H1 (cell line): ENCODE measurements at regions of chr12 and their contacts with region 1.

Region 1: DNA sequence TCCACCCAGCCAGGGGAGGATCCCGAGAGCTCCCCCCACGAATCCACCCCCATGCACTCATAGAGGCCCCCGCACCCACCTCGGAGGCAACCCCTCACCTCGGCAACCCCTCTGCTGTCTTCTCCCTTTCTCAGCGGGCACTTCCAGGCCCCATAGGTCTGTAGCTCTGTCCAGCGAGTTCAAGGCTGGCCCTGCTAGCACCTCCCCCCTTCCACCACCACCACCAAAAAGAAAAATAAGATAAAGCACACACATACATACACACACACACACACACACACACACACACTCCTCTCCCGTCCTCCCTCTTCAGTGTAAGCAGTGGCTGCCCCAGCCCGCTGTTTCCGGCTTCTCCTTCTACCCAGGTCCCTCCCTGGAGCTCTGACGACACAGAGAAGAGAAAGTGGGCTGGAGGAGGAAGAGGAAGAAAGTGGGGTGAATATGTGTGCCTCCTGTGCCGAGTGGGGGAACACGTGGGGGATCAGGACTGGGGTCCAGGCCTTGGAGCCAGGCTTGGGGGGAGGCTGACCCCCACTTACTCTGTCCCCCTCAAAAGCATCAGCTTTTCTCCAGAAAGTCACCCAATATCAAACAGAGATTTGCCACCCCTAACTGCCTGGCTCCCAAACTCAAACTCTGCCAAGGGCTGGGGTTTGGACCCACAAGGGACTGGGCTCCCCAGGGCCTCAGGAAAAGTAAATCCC is at the start of gene STAT6:
- DNase-seq: no peak
- H3K4me3 ChIP-seq: peak within 1 kb of the TSS; percentile 9 to 59 (median 50)
- H3K27ac ChIP-seq: peak within 1 kb of the TSS; percentile 87
- H3K4me1 ChIP-seq: peaks cover 3 to 31% (median 15%) of the 10 kb centered on the region in 4 experiments
- H3K27me3 ChIP-seq: no peaks in the 10 kb centered on the region
- CTCF ChIP-seq: no peak
- EP300 ChIP-seq: no peak
- POLR2A ChIP-seq: no peak
- RAD21 ChIP-seq: no peak
- total RNA-seq, gene STAT6: 26.8 and 32.9 TPM in 2 replicates

Region 2: DNA sequence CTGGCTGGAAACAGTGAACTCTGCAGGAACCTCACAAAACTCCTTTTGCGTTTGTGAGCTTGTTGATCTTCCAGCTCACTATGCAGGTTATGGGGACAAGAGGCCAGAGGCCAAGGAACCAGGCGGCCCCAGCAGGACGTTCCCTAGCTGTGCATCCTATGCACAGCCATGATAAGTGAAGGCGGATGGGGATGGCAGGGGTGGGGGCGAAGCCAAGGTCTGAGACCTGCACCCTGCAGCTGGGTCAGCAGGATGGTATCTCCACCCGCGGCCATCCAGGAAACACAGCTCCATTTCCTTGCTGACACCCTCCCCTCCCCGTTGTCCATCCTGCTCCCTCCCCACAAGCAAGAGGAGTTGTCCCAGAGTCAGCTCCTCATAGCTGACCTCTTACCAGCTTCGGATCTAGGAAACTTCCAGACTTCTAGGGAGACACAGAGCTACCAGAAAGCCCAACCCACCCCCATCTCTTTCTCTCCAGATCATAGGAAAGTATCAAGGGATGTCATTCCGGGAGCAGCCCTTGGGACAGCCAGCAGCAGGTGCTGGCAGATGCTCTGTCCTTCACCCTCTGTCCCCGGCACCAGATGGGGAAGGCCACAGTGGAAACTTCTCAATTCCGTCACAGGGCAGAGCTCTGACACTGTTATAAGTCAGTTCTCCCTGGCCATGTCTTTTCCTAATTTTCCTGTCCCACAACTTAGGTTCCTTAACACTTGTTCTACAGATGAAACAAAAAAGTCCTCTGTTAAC is 114.2 kb before region 1 on chr12:
- CTCF ChIA-PET with region 1: interaction called, 49 read pairs
- POLR2A ChIA-PET with region 1: no interaction called
- DNase-seq: peak in 1 of 2 experiments; percentile 37
- H3K4me3 ChIP-seq: no peak overlapping the region
- H3K27ac ChIP-seq: no peak overlapping the region
- H3K4me1 ChIP-seq: no peaks in the 10 kb centered on the region
- H3K27me3 ChIP-seq: no peaks in the 10 kb centered on the region
- CTCF ChIP-seq: no peak
- EP300 ChIP-seq: no peak
- POLR2A ChIP-seq: no peak
- RAD21 ChIP-seq: no peak

Region 3: DNA sequence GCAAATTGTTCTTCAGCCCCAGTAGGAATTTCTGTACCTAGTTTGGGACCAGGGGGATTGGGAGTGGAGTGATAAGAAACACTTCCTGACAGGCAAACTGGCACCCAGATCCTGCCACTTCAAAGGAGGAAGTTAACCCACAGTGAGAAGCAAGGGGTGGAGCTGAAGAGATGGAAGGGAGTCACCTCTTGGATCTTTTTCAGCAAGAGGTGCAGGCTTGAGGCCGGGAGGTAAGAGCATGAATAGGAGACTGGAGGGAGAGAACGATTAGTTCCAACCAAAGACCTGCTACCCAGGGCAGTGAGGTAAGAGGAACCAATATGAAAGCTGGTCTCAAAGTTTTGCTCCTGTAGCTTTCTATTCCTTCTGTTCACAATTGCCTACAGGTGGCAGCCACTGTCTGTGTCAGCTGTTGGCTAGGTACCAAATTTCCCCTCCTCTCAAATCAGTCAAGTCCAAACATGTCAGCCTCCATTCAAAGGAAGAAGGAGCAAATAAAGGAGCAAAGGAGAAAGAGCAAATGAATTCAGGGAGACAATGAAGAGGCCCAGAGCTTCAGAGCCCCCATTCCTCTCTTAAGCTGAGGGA is 80.0 kb before region 1 on chr12:
- CTCF ChIA-PET with region 1: interaction called, 17 read pairs
- POLR2A ChIA-PET with region 1: interaction called, 16 read pairs
- DNase-seq: no peak
- H3K4me3 ChIP-seq: no peak overlapping the region
- H3K27ac ChIP-seq: no peak overlapping the region
- H3K4me1 ChIP-seq: peaks cover 0 to 8% (median 3%) of the 10 kb centered on the region in 4 experiments; a peak in 5 of 7 replicates
- H3K27me3 ChIP-seq: peaks cover 0 to 3% (median 0%) of the 10 kb centered on the region in 4 experiments; a peak in 1 of 7 replicates
- CTCF ChIP-seq: peak in 2 of 3 experiments; percentile 12 to 46; a peak in 3 of 4 replicates
- EP300 ChIP-seq: no peak
- POLR2A ChIP-seq: no peak
- RAD21 ChIP-seq: peak; percentile 42 to 58

Region 4: GRCh38 chr12:57063991-57064685 is 47.0 kb before region 1 on chr12:
- CTCF ChIA-PET with region 1: interaction called, 225 read pairs
- POLR2A ChIA-PET with region 1: interaction called, 43 read pairs
- DNase-seq: no peak
- H3K4me3 ChIP-seq: no peak overlapping the region
- H3K27ac ChIP-seq: no peak overlapping the region
- H3K4me1 ChIP-seq: no peaks in the 10 kb centered on the region
- H3K27me3 ChIP-seq: no peaks in the 10 kb centered on the region
- CTCF ChIP-seq: no peak
- EP300 ChIP-seq: no peak
- POLR2A ChIP-seq: no peak
- RAD21 ChIP-seq: no peak

Region 5: DNA sequence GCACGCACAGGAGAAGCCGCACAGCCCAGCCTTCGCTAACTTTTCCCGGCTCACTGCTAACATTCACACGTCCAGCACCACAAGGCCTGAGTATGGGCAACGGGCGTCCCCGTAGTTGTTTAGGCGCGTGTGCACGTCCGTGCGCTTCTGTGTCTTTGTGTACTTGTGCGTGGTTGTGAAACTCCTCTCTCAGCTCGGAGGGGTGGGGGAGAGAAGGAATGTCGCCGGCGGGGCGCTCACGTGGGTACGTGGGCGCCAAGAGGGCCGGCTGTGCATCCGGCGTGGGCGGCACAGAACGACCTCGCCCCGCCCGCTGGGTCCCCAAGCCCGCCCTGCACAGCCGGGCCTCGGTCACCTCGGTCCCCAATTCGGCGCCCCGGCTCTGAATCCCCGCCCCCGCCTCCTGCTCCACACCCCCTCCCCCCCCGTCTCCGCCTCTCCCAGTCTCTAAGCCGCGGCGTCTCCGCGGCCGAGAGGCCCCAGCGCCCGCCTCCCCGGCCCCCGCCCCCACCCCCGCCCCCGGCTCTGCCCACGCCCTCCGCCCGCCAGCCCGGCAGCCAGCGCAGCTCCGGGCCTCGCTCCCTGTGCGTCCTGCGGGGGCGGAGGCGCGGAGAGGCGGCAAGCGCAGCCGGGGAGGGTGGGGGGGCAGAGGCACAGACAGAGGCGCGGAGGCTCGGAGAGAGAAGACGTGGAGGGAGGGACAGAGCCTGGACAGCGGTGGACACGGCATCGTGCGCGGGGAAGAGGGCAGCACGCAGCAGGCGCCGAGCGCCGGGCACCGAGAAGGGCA is 22.5 kb before region 1 on chr12 and contains the start of gene NAB2:
- CTCF ChIA-PET with region 1: interaction called, 325 read pairs
- POLR2A ChIA-PET with region 1: interaction called, 352 read pairs
- DNase-seq: peak in 1 of 2 experiments; percentile 87
- H3K4me3 ChIP-seq: peak within 1 kb of the TSS; percentile 92 to 96 (median 93)
- H3K27ac ChIP-seq: peak within 1 kb of the TSS; percentile 84
- H3K4me1 ChIP-seq: peaks cover 0 to 25% (median 15%) of the 10 kb centered on the region in 4 experiments; a peak in 6 of 7 replicates
- H3K27me3 ChIP-seq: no peaks in the 10 kb centered on the region
- CTCF ChIP-seq: no peak
- EP300 ChIP-seq: no peak
- POLR2A ChIP-seq: 0 out of 3 replicates have a peak, but pooled peaks of 1 of the 2 experiments have one; percentile 3
- RAD21 ChIP-seq: no peak
- total RNA-seq, gene NAB2: 20.6 and 20.9 TPM in 2 replicates

Region 6: GRCh38 chr12:57175428-57176138 is 64.4 kb after region 1 on chr12:
- CTCF ChIA-PET with region 1: interaction called, 305 read pairs
- POLR2A ChIA-PET with region 1: interaction called, 4 read pairs
- DNase-seq: peak; percentile 50 to 98
- H3K4me3 ChIP-seq: no peak overlapping the region
- H3K27ac ChIP-seq: no peak overlapping the region
- H3K4me1 ChIP-seq: no peaks in the 10 kb centered on the region
- H3K27me3 ChIP-seq: no peaks in the 10 kb centered on the region
- CTCF ChIP-seq: peak in 2 of 3 experiments; percentile 87 to 93; a peak in 3 of 4 replicates
- EP300 ChIP-seq: no peak
- POLR2A ChIP-seq: no peak
- RAD21 ChIP-seq: peak; percentile 45 to 61

Region 7: DNA sequence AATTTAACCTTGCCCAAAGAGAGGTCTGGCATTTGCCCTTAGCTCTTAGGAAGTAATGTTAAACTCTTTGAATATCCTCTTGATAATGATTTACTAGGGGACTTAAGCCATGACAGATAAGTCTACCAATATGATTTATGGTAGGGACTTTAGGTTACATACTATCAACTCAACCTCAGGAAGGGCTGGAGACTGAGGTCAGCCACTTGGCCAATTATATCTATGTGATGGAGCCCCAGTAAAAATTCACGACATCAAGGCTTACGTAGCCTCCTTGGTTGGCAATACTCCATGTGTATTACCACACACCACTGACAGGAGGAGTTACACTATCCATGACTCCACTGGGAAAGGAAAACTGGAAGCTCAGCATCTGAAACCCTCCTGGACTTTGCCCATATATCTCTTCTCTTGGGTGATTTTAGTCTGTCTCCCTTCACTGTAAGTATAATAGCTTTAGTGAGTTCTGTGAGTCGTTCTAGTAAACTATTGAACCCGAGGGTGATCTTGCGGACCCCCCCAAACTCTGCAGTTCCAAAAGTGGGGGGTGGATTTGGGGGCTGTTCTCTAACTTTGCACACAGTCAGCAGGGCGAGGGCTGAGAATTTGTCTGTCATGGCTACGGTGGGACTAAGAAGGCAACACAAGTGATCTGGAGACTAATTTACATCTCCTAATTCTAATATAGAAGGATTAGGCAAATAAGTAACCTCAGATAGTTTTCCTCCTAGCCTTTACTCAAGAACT is 257.3 kb after region 1 on chr12:
- CTCF ChIA-PET with region 1: no interaction called
- POLR2A ChIA-PET with region 1: no interaction called
- DNase-seq: no peak
- H3K4me3 ChIP-seq: no peak overlapping the region
- H3K27ac ChIP-seq: no peak overlapping the region
- H3K4me1 ChIP-seq: no peaks in the 10 kb centered on the region
- H3K27me3 ChIP-seq: no peaks in the 10 kb centered on the region
- CTCF ChIP-seq: peak in 1 of 3 experiments; percentile 32; a peak in 1 of 4 replicates
- EP300 ChIP-seq: no peak
- POLR2A ChIP-seq: no peak
- RAD21 ChIP-seq: peak in 1 of 2 experiments; percentile 36; a peak in 2 of 4 replicates